G401 (cell line): ENCODE measurements at regions of chr5 and their contacts with region 1.

Region 1: DNA sequence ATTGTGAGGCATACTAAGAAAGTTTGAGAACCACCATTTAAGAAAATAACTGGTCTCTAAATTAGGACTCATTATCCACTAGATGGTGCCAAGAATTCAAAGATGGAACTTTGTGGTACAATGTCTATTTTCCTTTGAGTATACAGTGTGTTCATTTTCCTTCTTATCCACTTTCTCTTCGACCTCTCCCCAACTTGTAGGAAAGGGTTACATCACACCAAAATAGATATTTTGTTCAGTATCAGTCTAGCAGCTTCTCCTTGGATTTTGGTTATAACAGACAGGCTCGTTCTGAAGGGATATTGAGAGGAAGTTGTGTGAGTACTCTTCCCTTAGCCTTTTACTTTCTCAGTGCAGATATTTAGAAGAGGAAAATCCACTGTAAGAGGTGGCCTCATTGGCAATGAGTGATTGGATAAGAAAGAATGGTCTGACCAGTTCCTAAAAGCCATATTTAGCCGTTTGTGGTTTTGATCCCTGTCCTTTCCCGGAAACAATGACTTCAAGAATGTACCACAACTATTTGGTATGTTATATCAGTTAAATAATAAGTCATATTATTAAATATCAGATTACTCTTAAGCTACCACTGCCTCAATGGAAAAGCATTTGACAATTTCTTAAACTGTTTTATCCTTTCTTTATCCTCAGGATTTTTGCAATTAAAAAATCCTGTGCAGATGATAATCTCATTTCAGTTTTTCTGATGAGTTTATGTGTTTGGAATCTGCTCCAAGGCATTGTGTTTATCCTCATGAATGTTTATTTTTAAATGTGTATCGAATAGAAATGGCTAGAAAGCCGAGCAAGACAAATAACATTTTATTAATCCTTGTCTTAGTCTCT is 69.0 kb upstream of the GRAMD2B start:
- DNase-seq: peak; percentile 69

Region 2: GRCh38 chr5:126284977-126285696 is 69.1 kb before region 1 on chr5:
- in situ Hi-C with region 1: no loop called
- DNase-seq: no peak

Region 3: GRCh38 chr5:126544087-126544740 is 190.0 kb after region 1 on chr5:
- in situ Hi-C with region 1: loop called (anchors 25 kb)
- DNase-seq: peak; percentile 17